CD4-positive, alpha-beta T cell (primary cell): ENCODE measurements at regions of chr5 and their contacts with region 1.

Region 1: GRCh38 chr5:103139264-103139865 is 19.3 kb downstream of the PPIP5K2 start:
- DNase-seq: peak; percentile 68 to 89 (median 80)
- ATAC-seq: peak; percentile 99
- H3K4me3 ChIP-seq: no peak overlapping the region
- H3K4me3 Mint-ChIP-seq: no peak overlapping the region
- H3K27ac ChIP-seq: no peak overlapping the region
- H3K27ac Mint-ChIP-seq: no peak overlapping the region
- H3K4me1 ChIP-seq: no peaks in the 10 kb centered on the region
- H3K4me1 Mint-ChIP-seq: peaks cover 15% of the 10 kb centered on the region
- H3K27me3 ChIP-seq: no peaks in the 10 kb centered on the region
- H3K27me3 Mint-ChIP-seq: no peaks in the 10 kb centered on the region
- CTCF ChIP-seq: peak; percentile 94

Region 2: GRCh38 chr5:102536323-102536928 is 602.9 kb before region 1 on chr5:
- CTCF ChIA-PET with region 1: no interaction called
- POLR2A ChIA-PET with region 1: no interaction called
- intact Hi-C with region 1: loop called (anchors 1 kb)
- DNase-seq: peak in 2 of 14 experiments; percentile 4 to 7
- ATAC-seq: no peak
- H3K4me3 ChIP-seq: no peak overlapping the region
- H3K4me3 Mint-ChIP-seq: no peak overlapping the region
- H3K27ac ChIP-seq: no peak overlapping the region
- H3K27ac Mint-ChIP-seq: no peak overlapping the region
- H3K4me1 ChIP-seq: no peaks in the 10 kb centered on the region
- H3K4me1 Mint-ChIP-seq: no peaks in the 10 kb centered on the region
- H3K27me3 ChIP-seq: no peaks in the 10 kb centered on the region
- H3K27me3 Mint-ChIP-seq: peaks cover 3% of the 10 kb centered on the region
- CTCF ChIP-seq: peak; percentile 56

Region 3: GRCh38 chr5:102583276-102584124 is 555.9 kb before region 1 on chr5:
- CTCF ChIA-PET with region 1: interaction called, 4 read pairs
- POLR2A ChIA-PET with region 1: no interaction called
- intact Hi-C with region 1: loop called (anchors 1 to 2 kb)
- DNase-seq: peak in 3 of 14 experiments; percentile 2 to 11 (median 9)
- ATAC-seq: no peak
- H3K4me3 ChIP-seq: no peak overlapping the region
- H3K4me3 Mint-ChIP-seq: no peak overlapping the region
- H3K27ac ChIP-seq: no peak overlapping the region
- H3K27ac Mint-ChIP-seq: no peak overlapping the region
- H3K4me1 ChIP-seq: no peaks in the 10 kb centered on the region
- H3K4me1 Mint-ChIP-seq: no peaks in the 10 kb centered on the region
- H3K27me3 ChIP-seq: no peaks in the 10 kb centered on the region
- H3K27me3 Mint-ChIP-seq: no peaks in the 10 kb centered on the region
- CTCF ChIP-seq: peak; percentile 55

Region 4: GRCh38 chr5:102681407-102681983 is 457.9 kb before region 1 on chr5:
- CTCF ChIA-PET with region 1: interaction called, 7 read pairs
- POLR2A ChIA-PET with region 1: no interaction called
- intact Hi-C with region 1: loop called in 1 of 2 experiments (anchors 2 kb)
- DNase-seq: peak; percentile 19 to 71 (median 34)
- ATAC-seq: peak; percentile 44
- H3K4me3 ChIP-seq: no peak overlapping the region
- H3K4me3 Mint-ChIP-seq: no peak overlapping the region
- H3K27ac ChIP-seq: no peak overlapping the region
- H3K27ac Mint-ChIP-seq: no peak overlapping the region
- H3K4me1 ChIP-seq: no peaks in the 10 kb centered on the region
- H3K4me1 Mint-ChIP-seq: no peaks in the 10 kb centered on the region
- H3K27me3 ChIP-seq: no peaks in the 10 kb centered on the region
- H3K27me3 Mint-ChIP-seq: no peaks in the 10 kb centered on the region
- CTCF ChIP-seq: peak; percentile 63

Region 5: DNA sequence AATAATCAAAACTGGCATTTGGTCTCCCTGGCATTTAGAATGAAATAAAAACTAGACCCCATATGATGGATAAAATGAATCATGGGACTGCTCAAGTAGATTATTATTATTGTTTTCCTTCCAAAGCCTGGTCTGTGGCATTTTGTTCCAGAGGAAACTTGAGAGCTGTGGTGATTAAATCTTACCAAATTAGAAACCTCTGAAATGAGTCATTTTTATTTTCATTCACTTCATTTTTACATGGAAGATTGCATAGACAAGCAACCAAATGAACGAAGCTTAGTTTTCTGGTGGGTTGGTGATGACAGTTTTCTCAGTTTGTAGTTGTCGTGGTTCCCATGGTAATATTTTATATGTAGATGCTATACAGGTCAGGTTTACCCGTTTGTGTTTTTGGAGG is 360.9 kb before region 1 on chr5:
- CTCF ChIA-PET with region 1: interaction called, 12 read pairs
- POLR2A ChIA-PET with region 1: interaction called, 3 read pairs
- intact Hi-C with region 1: loop called (anchors 1 to 2 kb)
- DNase-seq: no peak
- ATAC-seq: no peak
- H3K4me3 ChIP-seq: no peak overlapping the region
- H3K4me3 Mint-ChIP-seq: no peak overlapping the region
- H3K27ac ChIP-seq: no peak overlapping the region
- H3K27ac Mint-ChIP-seq: no peak overlapping the region
- H3K4me1 ChIP-seq: peaks cover 3% of the 10 kb centered on the region
- H3K4me1 Mint-ChIP-seq: peaks cover 32% of the 10 kb centered on the region
- H3K27me3 ChIP-seq: no peaks in the 10 kb centered on the region
- H3K27me3 Mint-ChIP-seq: no peaks in the 10 kb centered on the region
- CTCF ChIP-seq: no peak

Region 6: DNA sequence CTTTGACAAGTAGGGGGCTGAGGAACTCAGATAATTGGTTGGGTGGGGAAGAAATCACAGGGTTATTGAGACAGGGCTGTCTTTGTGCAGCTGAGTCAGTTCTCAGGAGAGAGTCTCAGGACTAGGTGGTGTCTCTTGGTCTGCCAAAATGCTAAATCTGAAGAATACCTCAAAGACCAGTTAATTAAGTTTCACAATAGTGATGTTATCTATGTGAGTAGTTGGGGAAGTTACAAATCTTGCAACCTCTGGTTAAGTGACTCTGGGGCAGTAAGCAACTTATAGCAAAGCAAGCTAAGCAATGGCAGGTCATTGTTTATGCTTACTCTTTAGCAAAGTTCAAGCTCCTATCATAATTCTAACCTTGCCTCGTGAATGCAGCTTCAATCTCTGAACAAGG is 73.0 kb before region 1 on chr5:
- CTCF ChIA-PET with region 1: no interaction called
- POLR2A ChIA-PET with region 1: no interaction called
- intact Hi-C with region 1: loop called (anchors 2 to 5 kb)
- DNase-seq: no peak
- ATAC-seq: no peak
- H3K4me3 ChIP-seq: no peak overlapping the region
- H3K4me3 Mint-ChIP-seq: no peak overlapping the region
- H3K27ac ChIP-seq: no peak overlapping the region
- H3K27ac Mint-ChIP-seq: no peak overlapping the region
- H3K4me1 ChIP-seq: no peaks in the 10 kb centered on the region
- H3K4me1 Mint-ChIP-seq: no peaks in the 10 kb centered on the region
- H3K27me3 ChIP-seq: no peaks in the 10 kb centered on the region
- H3K27me3 Mint-ChIP-seq: no peaks in the 10 kb centered on the region
- CTCF ChIP-seq: no peak